ENCODE measurements at regions of chr6 and their contacts with region 1.

Region 1: DNA sequence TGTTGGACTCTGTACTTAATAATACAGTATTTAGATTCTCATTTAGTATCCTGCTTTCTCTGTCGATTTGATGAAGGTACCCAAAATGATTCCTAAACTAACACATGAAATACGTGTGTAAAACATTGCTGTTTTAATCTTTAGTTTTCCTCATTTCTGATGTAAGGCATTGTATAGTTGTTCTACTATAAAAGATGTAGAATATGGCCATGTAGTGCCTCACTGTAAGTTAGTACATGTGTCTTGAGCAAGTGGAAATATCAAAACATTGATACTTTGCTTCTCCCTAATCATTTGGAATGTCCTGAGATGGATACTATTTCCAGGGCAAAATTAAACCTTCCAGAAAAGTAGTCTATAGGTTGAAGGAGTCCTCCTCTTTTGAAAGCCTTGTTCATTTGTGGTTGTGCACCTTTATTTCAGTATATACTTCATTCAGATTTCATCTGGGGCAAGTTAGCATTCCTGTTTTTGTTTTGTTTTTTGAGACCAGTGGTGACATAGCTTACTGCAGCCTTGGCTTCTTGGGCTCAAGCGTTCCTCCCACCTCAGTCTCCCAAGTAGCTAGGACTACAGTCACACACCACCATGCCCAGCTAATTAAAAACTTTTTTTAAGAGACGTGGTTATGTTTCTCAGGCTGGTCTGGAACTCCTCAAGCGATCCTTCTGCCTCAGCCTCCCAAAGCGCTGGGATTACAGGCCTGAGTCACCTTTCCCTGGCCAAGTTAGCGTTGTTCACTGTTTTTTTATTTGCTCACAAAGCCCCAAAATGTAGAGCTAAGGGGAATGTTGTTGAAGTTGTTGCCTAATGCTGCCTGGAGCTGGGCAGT is 11.6 kb downstream of the SRSF3 start:
- DNase-seq: no peak
- ATAC-seq: peak; percentile 36; a peak in 4 of 6 replicates
- H3K4me3 ChIP-seq: no peak overlapping the region
- H3K27ac ChIP-seq: no peak overlapping the region
- H3K4me1 ChIP-seq: peaks cover 75% of the 10 kb centered on the region; the same call in 2 of the 3 replicates
- CTCF ChIP-seq: no peak
- EP300 ChIP-seq: no peak
- POLR2A ChIP-seq: no peak
- RAD21 ChIP-seq: no peak

Region 2: GRCh38 chr6:36526066-36526465 is 79.7 kb before region 1 on chr6:
- CTCF ChIA-PET with region 1: no interaction called
- POLR2A ChIA-PET with region 1: no interaction called
- DNase-seq: no peak
- ATAC-seq: no peak
- H3K4me3 ChIP-seq: no peak overlapping the region
- H3K27ac ChIP-seq: no peak overlapping the region
- H3K4me1 ChIP-seq: 0 out of 3 replicates have a peak, but pooled peaks cover 4% of the 10 kb centered on the region
- CTCF ChIP-seq: no peak
- EP300 ChIP-seq: no peak
- POLR2A ChIP-seq: no peak
- RAD21 ChIP-seq: no peak

Region 3: GRCh38 chr6:36580184-36580526 is 25.6 kb before region 1 on chr6:
- CTCF ChIA-PET with region 1: no interaction called
- POLR2A ChIA-PET with region 1: interaction called, 10 read pairs
- DNase-seq: no peak
- ATAC-seq: no peak; a peak in 1 of 6 replicates
- H3K4me3 ChIP-seq: no peak overlapping the region
- H3K27ac ChIP-seq: peak overlapping the region; percentile 77 to 88
- H3K4me1 ChIP-seq: peaks cover 40% of the 10 kb centered on the region
- CTCF ChIP-seq: no peak
- EP300 ChIP-seq: no peak
- POLR2A ChIP-seq: no peak
- RAD21 ChIP-seq: no peak

Region 4: GRCh38 chr6:36594816-36595643 is 10.7 kb before region 1 on chr6:
- CTCF ChIA-PET with region 1: interaction called, 5 read pairs
- POLR2A ChIA-PET with region 1: interaction called, 15 read pairs
- DNase-seq: peak in 1 of 2 experiments; percentile 56
- ATAC-seq: peak in 1 of 2 experiments; percentile 14; a peak in 1 of 6 replicates
- H3K4me3 ChIP-seq: peak overlapping the region; percentile 86
- H3K27ac ChIP-seq: peak overlapping the region; percentile 81 to 92
- H3K4me1 ChIP-seq: peaks cover 49% of the 10 kb centered on the region
- CTCF ChIP-seq: no peak
- EP300 ChIP-seq: no peak
- POLR2A ChIP-seq: no peak
- RAD21 ChIP-seq: no peak

Region 5: DNA sequence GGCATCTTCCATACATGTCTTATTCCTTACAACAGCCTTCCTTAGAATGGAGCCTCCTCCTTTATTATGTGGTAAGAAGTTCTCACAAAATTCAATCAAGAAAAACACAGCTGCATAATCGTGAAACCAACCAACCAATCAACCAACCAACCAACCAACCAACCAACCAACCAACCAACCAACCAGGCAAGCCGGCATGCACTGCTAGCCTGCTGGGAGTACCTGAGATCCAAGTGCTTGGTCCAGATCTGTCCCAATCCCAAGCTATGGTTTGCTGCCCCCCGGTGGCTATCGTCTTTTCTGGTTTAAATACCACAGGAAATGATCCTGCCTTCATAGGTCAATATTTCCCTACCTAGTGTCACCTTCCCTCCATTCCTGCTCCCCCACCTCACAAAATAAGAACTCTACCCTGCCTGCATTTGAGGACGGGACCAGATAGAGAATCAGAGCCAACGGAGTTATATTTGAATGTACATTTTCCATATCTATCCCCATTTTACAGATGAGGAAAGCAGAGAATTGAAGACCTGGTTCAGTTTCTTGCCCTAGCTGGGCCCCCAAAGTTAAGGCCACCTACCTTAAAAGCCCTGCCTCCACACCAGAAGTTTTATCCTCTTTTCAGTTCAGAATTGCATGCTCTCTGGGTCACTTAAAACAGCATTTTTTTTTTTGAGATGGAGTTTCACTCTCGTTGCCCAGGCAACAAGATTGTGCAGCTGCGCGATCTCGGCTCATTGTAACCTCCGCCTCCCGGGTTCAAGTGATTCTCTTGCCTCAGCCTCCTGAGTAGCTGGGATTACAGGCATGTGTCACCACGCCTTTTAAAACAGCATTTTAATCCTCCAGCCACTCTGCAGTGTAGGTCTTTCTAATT is 119.0 kb after region 1 on chr6:
- CTCF ChIA-PET with region 1: interaction called, 20 read pairs
- POLR2A ChIA-PET with region 1: no interaction called
- DNase-seq: peak; percentile 70 to 72
- ATAC-seq: peak; percentile 78 to 92
- H3K4me3 ChIP-seq: no peak overlapping the region
- H3K27ac ChIP-seq: no peak overlapping the region
- H3K4me1 ChIP-seq: no peaks in the 10 kb centered on the region
- CTCF ChIP-seq: peak; percentile 68
- EP300 ChIP-seq: no peak
- POLR2A ChIP-seq: no peak
- RAD21 ChIP-seq: peak; percentile 76 to 82

Region 6: GRCh38 chr6:37137201-37138090 is 531.7 kb after region 1 on chr6:
- CTCF ChIA-PET with region 1: no interaction called
- POLR2A ChIA-PET with region 1: interaction called, 12 read pairs
- DNase-seq: peak; percentile 85 to 94
- ATAC-seq: peak; percentile 68 to 76
- H3K4me3 ChIP-seq: peak overlapping the region; percentile 32
- H3K27ac ChIP-seq: peak overlapping the region; percentile 93 to 96
- H3K4me1 ChIP-seq: peaks cover 82% of the 10 kb centered on the region
- CTCF ChIP-seq: no peak
- EP300 ChIP-seq: peak; percentile 47 to 60; a peak in 2 of 5 replicates
- POLR2A ChIP-seq: no peak
- RAD21 ChIP-seq: no peak; a peak in 2 of 5 replicates